ENCODE measurements at regions of chr12 and their contacts with region 1.

Region 1: DNA sequence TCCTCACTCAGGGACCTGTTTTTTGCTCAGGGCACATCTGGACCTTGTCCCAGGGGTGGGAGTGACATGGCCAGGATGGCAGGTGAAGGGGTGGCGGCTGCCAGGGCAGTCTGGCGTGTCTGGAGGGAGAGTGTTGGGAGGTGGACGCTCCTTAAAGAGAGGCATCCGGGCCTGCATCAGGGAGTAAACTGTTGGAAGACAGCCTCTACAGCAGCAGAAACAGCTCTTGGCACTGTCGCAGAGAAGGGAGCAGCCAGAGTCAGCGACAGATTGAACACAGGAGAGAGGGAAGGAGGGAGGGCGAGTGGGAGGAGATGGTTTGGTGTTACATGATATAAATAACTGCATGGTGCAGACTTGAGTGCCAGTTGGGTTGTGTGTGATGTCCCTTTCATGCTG is 52.8 kb downstream of the IGF1 start:
- DNase-seq: peak; percentile 45 to 75
- ATAC-seq: peak; percentile 82 to 94 (median 90)
- H3K4me3 ChIP-seq: peak overlapping the region; percentile 15
- H3K27ac ChIP-seq: peak overlapping the region; percentile 85
- H3K4me1 ChIP-seq: peaks cover 26% of the 10 kb centered on the region
- H3K27me3 ChIP-seq: no peaks in the 10 kb centered on the region
- CTCF ChIP-seq: no peak

Region 2: GRCh38 chr12:102350070-102350469 is 77.5 kb before region 1 on chr12:
- intact Hi-C with region 1: loop called in 1 of 2 experiments (anchors 5 kb)
- DNase-seq: no peak
- ATAC-seq: peak in 3 of 4 donors; percentile 66 to 82 (median 71)
- H3K4me3 ChIP-seq: peak overlapping the region; percentile 16
- H3K27ac ChIP-seq: peak overlapping the region; percentile 56
- H3K4me1 ChIP-seq: peaks cover 35% of the 10 kb centered on the region
- H3K27me3 ChIP-seq: no peaks in the 10 kb centered on the region
- CTCF ChIP-seq: no peak

Region 3: DNA sequence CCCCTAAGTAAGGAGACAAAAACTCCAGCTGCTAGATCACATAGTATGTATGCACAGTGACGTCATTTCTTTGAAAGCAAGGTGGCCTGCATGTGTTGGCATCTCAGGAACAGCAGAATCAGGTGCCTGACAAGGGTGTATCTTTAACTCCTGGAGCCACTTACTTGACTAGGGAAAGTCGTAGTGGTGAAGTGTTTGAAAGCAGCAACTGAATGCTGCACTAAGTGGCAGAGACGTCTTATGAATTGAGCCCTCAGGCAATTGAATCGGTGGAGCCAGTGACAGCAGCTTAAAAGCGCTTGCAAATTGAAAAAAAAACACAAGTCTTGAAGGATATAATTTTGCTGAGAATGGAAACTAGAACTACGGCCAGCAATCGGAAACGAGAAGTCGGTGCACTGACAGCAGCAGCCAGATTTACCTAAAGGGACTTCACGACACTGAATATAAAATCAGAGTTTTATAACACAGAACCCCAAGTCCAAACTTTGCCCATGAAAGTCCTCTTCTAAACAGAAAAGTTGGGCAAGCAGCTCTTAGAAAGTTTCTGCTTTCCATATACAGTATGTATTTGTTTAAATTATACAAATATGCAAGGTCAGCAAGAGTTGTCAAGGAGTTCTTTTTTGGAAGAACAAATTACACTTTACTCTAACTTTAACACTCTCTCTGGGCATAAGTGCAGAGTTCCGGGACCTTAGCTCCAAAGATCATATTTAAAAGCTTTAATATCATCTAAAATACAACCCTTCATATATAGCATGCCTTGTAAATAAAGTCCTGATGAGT is 51.8 kb after region 1 on chr12:
- intact Hi-C with region 1: loop called in 1 of 2 experiments (anchors 5 kb)
- DNase-seq: no peak
- ATAC-seq: peak in 3 of 4 donors; percentile 29 to 54 (median 47)
- H3K4me3 ChIP-seq: peak overlapping the region; percentile 64
- H3K27ac ChIP-seq: peak overlapping the region; percentile 60
- H3K4me1 ChIP-seq: peaks cover 13% of the 10 kb centered on the region
- H3K27me3 ChIP-seq: no peaks in the 10 kb centered on the region
- CTCF ChIP-seq: no peak

Region 4: DNA sequence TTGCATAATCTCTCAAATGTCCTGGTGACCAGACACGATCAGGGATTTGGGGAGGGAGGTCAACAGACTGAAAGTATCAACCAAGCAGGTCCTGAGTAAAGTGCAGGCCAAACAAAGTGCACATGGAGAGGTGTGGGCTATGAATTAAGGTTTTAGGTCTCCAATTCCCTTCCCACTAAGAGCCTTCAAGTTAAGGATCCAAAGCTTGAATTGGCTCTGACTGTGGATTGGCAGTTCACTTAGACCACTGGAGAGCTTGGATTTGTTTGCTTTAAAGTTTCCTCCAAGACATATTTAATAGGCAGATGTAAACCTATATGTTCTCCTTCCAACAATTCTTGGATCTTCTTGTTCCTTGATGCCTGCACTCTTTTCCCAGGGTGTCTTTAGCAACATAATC is 182.5 kb after region 1 on chr12:
- intact Hi-C with region 1: no loop called
- DNase-seq: no peak
- ATAC-seq: no peak
- H3K4me3 ChIP-seq: no peak overlapping the region
- H3K27ac ChIP-seq: no peak overlapping the region
- H3K4me1 ChIP-seq: no peaks in the 10 kb centered on the region
- H3K27me3 ChIP-seq: no peaks in the 10 kb centered on the region
- CTCF ChIP-seq: no peak